Activated CD4-positive, alpha-beta T cell treated with anti-CD3 and anti-CD28 coated beads for 36 hours (primary cell): ENCODE measurements at regions of chr20 and their contacts with region 1.

Region 1: GRCh38 chr20:33299111-33299603 is 16.1 kb downstream of the BPIFB1 start:
- DNase-seq: peak; percentile 84
- ATAC-seq: peak; percentile 90
- H3K4me3 Mint-ChIP-seq: no peak overlapping the region
- H3K27ac Mint-ChIP-seq: no peak overlapping the region
- H3K4me1 Mint-ChIP-seq: no peaks in the 10 kb centered on the region
- H3K27me3 Mint-ChIP-seq: peaks cover 6% of the 10 kb centered on the region

Region 2: DNA sequence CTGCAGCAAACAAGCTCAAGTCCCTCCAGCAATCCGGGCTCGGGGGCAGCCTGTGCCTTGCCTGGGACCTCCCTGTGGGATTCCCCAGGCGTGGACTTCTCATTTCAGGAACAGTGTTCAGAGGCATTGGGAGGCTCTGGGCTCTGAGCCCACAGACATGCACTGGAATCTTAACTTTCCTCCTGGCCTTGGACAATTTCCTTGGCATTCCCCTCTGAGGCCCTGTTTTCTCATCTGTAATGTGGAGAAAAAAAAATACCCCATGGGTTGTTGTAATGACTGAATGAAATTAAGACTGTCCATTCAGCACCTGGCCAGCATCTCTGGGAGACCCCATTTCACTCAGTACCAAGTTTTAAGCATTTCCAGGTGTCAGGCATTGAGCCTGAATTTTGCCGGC is 202.2 kb before region 1 on chr20:
- CTCF ChIA-PET with region 1: interaction called, 3 read pairs
- POLR2A ChIA-PET with region 1: no interaction called
- intact Hi-C with region 1: loop called (anchors 2 to 5 kb)
- DNase-seq: no peak
- ATAC-seq: no peak
- H3K4me3 Mint-ChIP-seq: no peak overlapping the region
- H3K27ac Mint-ChIP-seq: no peak overlapping the region
- H3K4me1 Mint-ChIP-seq: peaks cover 2% of the 10 kb centered on the region
- H3K27me3 Mint-ChIP-seq: no peaks in the 10 kb centered on the region